ENCODE measurements at regions of chr4 and their contacts with region 1.

Region 1: GRCh38 chr4:38943343-38943742 is 75.7 kb downstream of the FAM114A1 start:
- DNase-seq: no peak
- H3K4me3 ChIP-seq: no peak overlapping the region
- H3K27ac ChIP-seq: no peak overlapping the region
- H3K4me1 ChIP-seq: peaks cover 0 to 5% (median 2%) of the 10 kb centered on the region in 4 experiments
- H3K27me3 ChIP-seq: no peaks in the 10 kb centered on the region

Region 2: DNA sequence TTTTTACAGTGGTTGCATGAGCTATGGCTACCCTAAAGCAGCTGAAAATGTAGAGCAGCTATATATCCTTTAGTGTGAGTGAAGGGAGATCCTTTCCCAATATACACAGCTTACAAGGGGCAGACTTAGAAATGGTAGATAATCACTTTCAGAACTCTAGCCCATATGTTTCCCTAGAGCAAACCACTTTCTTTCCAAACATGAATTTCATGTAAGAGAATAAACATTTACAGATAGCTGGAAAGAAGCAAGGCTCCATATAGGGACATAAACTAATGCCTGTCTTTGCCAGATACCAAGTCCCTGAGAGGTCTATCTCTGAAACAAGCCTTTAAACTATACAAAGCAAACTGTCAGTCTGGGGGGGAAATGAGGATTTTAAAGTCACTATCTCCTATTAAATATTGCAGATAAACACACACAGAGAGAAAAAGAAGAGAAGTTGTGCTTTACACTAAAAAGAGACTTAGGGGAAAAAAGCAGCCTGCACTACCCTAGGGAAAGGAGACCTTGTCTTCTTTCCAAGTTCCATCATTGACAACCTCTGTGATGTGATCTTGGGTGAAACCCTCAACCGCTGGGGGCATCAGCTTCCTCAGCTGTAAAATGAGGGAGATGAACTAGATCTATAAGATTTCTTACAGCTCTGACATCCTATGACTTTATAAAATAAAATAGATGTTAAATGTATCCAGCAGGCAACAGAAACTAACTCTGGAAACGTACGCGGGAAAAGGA is 15.3 kb after region 1 on chr4:
- CTCF ChIA-PET with region 1: interaction called, 10 read pairs
- POLR2A ChIA-PET with region 1: no interaction called
- DNase-seq: peak; percentile 63 to 93 (median 84)
- H3K4me3 ChIP-seq: peak overlapping the region in 1 of 7 experiments; percentile 13
- H3K27ac ChIP-seq: peak overlapping the region; percentile 12 to 59
- H3K4me1 ChIP-seq: peaks cover 15 to 20% (median 18%) of the 10 kb centered on the region in 4 experiments
- H3K27me3 ChIP-seq: no peaks in the 10 kb centered on the region